Mammary epithelial cell (primary cell): ENCODE measurements at regions of chr19 and their contacts with region 1.

Region 1: GRCh38 chr19:34881982-34882381 is 44.7 kb upstream of the ZNF30 start:
- DNase-seq: peak; percentile 29
- H3K4me3 ChIP-seq: no peak overlapping the region
- H3K27ac ChIP-seq: no peak overlapping the region
- H3K4me1 ChIP-seq: no peaks in the 10 kb centered on the region
- H3K27me3 ChIP-seq: no peaks in the 10 kb centered on the region
- CTCF ChIP-seq: no peak

Region 2: GRCh38 chr19:34943861-34944573 is 62.0 kb after region 1 on chr19:
- CTCF ChIA-PET with region 1: no interaction called
- dilution Hi-C with region 1: loop called (anchors 10 kb)
- in situ Hi-C with region 1: no loop called
- intact Hi-C with region 1: no loop called
- DNase-seq: no peak
- H3K4me3 ChIP-seq: no peak overlapping the region
- H3K27ac ChIP-seq: no peak overlapping the region
- H3K4me1 ChIP-seq: no peaks in the 10 kb centered on the region
- H3K27me3 ChIP-seq: no peaks in the 10 kb centered on the region
- CTCF ChIP-seq: no peak